ENCODE measurements at regions of chr22 and their contacts with region 1.

Region 1: DNA sequence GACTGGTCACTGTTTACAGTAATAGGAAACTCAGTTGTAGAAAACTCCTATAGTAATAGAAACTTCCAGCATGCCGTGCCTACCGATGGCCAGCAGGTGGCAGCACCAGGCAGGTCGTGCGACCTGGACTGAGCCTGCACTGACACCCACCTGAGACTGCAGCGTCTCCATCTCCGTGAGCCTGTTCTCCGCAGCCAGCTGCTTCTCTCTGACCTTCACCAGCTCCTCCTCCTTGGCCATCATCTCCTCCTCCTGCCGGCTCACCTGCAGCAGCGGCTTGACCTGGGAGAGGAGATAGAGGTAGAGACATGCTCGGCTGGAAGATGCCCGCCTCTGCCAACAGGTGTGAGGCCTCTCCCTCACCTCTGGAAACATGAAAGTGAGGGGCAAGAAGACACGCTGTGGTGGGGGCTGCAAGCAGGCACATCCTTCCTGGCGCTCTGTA is 48.5 kb downstream of the APOL1 start:
- DNase-seq: peak; percentile 28 to 70
- ATAC-seq: peak; percentile 64 to 76; a peak in 5 of 6 replicates
- H3K4me3 ChIP-seq: no peak overlapping the region
- H3K27ac ChIP-seq: peak overlapping the region in 1 of 2 experiments; percentile 40; a peak in 1 of 6 replicates
- H3K4me1 ChIP-seq: peaks cover 27% of the 10 kb centered on the region; the same call in 2 of the 3 replicates
- CTCF ChIP-seq: peak; percentile 68
- EP300 ChIP-seq: no peak
- POLR2A ChIP-seq: no peak
- RAD21 ChIP-seq: peak; percentile 73 to 75

Region 2: DNA sequence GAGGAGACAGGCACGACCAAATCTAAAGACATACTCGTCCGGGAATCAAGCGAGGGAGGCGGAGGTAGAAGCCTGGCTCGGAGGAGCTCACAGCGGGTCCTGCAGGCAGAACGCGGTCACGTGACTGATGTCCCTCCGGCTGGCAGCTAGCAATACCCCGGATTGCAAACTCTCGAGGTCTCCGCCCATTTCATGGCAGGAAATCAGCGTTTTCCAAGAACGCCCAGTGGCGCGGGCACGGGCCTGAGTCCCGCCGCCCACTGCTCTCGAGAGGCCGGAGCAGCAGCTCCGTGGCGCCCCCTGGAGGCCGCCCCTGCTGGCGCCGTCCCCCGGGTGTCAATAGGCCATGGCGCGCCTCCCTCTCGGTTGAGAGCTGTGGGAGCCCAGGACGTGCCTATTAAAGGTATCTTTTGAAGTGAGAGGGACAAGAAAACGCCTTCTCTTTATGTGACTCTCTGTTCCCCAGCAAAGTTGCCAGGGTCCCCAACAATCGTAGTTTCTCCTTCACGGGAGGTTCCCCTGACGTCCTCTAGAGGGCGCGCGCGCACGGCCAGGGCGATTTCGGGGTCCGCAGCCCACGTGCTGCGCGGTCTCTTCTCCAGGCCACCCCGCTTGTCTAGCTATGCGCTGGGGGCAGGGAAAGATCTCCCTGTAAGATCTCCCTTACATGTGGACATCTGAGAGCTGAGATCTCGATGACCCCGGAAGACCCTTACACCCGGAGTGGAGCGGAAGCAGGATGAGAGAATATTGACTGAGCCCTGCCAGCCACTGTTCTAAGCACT is 235.4 kb before region 1 on chr22:
- CTCF ChIA-PET with region 1: no interaction called
- POLR2A ChIA-PET with region 1: no interaction called
- DNase-seq: peak; percentile 89 to 92
- ATAC-seq: peak; percentile 94 to 96
- H3K4me3 ChIP-seq: peak overlapping the region; percentile 44
- H3K27ac ChIP-seq: peak overlapping the region; percentile 88 to 92
- H3K4me1 ChIP-seq: peaks cover 5% of the 10 kb centered on the region; the same call in 2 of the 3 replicates
- CTCF ChIP-seq: peak; percentile 100
- EP300 ChIP-seq: no peak
- POLR2A ChIP-seq: peak; percentile 62
- RAD21 ChIP-seq: peak; percentile 45 to 86

Region 3: DNA sequence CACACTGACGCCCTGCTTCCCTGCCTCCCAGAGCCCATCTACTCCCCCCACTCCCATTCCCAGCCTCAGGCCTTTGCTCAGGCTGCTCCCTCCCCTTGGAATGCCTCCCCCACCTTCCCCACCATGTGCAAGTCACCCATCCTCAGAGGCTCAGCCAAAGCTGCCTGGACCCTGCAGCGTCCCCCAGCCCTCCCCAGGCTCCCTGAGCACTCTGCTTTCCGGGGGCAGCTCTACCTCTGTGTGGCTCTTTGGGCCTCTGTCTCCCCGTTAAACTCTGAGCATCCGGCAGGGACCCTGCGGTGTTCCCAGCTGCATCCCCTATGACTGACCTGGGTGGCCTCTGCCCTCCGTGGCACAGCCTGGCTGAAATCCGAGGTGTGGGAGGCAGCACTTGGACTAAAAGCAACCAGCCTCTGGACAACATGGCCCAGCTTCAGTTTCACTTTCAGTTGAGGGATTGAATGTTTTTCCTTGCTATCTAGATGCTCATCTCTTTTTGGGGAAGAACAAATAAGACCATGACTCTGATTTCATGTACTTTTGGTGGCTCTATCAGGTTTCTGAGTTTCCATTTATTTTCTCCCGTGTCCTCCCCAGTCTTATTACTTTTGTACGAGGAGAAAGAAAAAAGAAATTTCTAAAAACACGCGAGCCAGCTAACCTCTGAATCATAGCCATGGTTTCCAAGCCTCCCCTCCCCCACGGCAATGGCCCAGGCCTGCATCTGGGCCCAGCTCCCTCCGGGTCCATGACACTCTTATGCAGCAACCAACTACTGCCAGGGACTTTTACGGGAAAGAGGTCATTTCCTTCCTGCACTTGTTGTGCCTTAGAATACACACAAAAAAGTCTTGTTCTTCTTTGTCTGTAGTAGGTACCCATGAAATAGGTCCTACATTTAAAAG is 144.6 kb before region 1 on chr22:
- CTCF ChIA-PET with region 1: no interaction called
- POLR2A ChIA-PET with region 1: no interaction called
- DNase-seq: no peak
- ATAC-seq: no peak
- H3K4me3 ChIP-seq: no peak overlapping the region
- H3K27ac ChIP-seq: peak overlapping the region in 1 of 2 experiments; percentile 26; a peak in 1 of 6 replicates
- H3K4me1 ChIP-seq: no peaks in the 10 kb centered on the region
- CTCF ChIP-seq: no peak
- EP300 ChIP-seq: no peak
- POLR2A ChIP-seq: no peak
- RAD21 ChIP-seq: no peak

Region 4: DNA sequence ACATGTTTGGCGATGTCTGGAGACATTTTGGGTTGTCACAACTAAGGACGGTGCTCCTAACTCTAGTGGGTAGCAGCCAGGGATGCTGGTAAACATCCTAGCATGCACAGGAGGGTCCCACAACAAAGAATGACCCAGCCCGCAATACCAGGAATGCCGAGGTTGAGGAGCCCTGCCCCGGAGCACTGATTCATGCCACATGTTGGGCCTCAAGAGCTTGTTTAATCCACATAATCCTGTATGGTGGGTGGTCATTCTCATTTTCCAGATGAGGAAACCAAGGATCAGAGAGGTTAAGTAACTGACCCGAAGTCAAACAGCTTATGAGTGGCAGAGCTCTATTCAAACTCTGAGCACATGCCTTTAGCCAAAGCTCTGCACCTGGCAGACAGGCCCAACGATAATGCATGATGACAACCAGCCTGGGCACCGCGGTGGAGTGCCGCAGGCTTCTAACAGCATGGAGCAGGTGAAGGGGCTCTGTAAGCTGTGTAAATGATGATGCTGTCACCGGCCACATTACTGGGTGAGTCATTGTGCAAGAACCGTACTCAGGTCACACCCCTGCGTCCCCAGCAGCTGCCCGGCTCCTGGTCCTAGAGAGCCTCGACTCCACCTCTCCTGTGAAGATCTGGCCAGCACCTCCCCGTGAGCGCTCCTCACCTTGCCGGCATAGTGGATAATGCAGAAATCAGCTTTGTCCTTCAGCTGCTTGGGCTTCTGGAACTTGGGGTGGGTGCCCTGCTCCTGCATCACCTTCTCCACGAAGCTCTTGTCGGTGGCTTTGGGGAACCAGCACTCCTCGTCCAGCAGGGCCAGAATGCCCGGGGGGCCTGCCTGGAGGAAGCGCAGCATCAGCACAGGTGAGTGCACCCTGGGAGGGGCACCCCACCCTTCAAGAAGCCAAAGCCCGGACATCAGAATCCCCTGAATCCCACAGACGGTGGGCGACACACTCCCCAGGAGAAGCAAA is 10.3 kb after region 1 on chr22:
- CTCF ChIA-PET with region 1: interaction called, 54 read pairs
- POLR2A ChIA-PET with region 1: interaction called, 5 read pairs
- DNase-seq: no peak
- ATAC-seq: no peak
- H3K4me3 ChIP-seq: no peak overlapping the region
- H3K27ac ChIP-seq: 0 out of 6 replicates have a peak overlapping the region, but pooled peaks of 1 of the 2 experiments have one; percentile 33
- H3K4me1 ChIP-seq: no peaks in the 10 kb centered on the region
- CTCF ChIP-seq: no peak
- EP300 ChIP-seq: no peak
- POLR2A ChIP-seq: no peak
- RAD21 ChIP-seq: no peak

Region 5: GRCh38 chr22:36323182-36323854 is 21.9 kb after region 1 on chr22:
- CTCF ChIA-PET with region 1: interaction called, 24 read pairs
- POLR2A ChIA-PET with region 1: no interaction called
- DNase-seq: no peak
- ATAC-seq: no peak
- H3K4me3 ChIP-seq: no peak overlapping the region
- H3K27ac ChIP-seq: peak overlapping the region in 1 of 2 experiments; percentile 99; a peak in 2 of 6 replicates
- H3K4me1 ChIP-seq: peaks cover 38% of the 10 kb centered on the region
- CTCF ChIP-seq: no peak
- EP300 ChIP-seq: no peak
- POLR2A ChIP-seq: no peak
- RAD21 ChIP-seq: no peak

Region 6: GRCh38 chr22:36359181-36359996 is 58.0 kb after region 1 on chr22:
- CTCF ChIA-PET with region 1: interaction called, 11 read pairs
- POLR2A ChIA-PET with region 1: no interaction called
- DNase-seq: no peak
- ATAC-seq: no peak
- H3K4me3 ChIP-seq: no peak overlapping the region
- H3K27ac ChIP-seq: peak overlapping the region; percentile 98 to 99
- H3K4me1 ChIP-seq: peaks cover 99% of the 10 kb centered on the region
- CTCF ChIP-seq: no peak
- EP300 ChIP-seq: no peak
- POLR2A ChIP-seq: no peak
- RAD21 ChIP-seq: no peak

Region 7: DNA sequence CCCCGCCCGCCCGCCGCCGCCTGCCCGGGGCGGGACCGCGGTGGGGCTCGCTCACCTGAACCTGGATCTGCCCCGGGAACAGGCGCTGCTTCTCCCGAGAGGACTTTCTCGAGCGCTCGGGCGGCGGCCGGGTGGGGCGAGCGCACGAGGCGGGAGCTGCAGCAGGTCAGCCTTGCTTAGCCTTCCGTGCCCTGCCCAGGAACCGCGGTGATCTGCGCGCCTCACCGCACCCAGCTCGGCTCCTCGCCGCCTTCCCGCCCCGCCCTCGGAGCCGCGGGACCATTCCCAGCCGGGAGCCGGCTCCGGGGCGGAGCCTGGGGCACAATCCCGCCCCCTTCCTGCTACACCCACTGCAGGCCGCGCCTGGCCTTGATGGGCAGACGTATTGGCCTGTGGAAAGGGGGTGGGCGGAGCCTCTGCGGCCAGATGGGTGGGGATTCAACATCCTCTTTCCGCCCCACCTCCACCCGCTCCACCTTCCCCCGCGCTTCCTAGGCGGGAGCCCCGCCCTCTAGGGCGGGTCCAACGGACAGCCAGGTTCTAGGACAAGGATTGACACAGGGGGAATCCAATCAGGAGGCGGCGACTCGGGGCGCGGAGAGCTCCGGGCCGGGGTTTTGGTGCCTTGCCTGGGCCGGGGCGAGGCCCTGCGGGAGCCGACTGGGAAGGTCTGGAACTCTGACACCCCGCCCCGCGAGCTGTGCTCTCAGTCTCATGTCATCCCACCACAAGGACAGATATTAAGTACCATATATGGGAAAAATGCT is 86.5 kb after region 1 on chr22 and contains the start of gene MYH9:
- CTCF ChIA-PET with region 1: interaction called, 13 read pairs
- POLR2A ChIA-PET with region 1: no interaction called
- DNase-seq: peak; percentile 92 to 98
- ATAC-seq: peak; percentile 88 to 93
- H3K4me3 ChIP-seq: peak within 1 kb of the TSS; percentile 100
- H3K27ac ChIP-seq: peak within 1 kb of the TSS; percentile 100
- H3K4me1 ChIP-seq: peaks cover 34% of the 10 kb centered on the region
- CTCF ChIP-seq: no peak
- EP300 ChIP-seq: no peak
- POLR2A ChIP-seq: peak; percentile 97
- RAD21 ChIP-seq: no peak
- polyA plus RNA-seq, gene MYH9: 92.1 and 162 TPM in 2 replicates

Region 8: GRCh38 chr22:36470162-36470993 is 169.0 kb after region 1 on chr22:
- CTCF ChIA-PET with region 1: interaction called, 113 read pairs
- POLR2A ChIA-PET with region 1: no interaction called
- DNase-seq: peak; percentile 55 to 84
- ATAC-seq: peak; percentile 77 to 84
- H3K4me3 ChIP-seq: no peak overlapping the region
- H3K27ac ChIP-seq: peak overlapping the region; percentile 69 to 98
- H3K4me1 ChIP-seq: peaks cover 50% of the 10 kb centered on the region
- CTCF ChIP-seq: peak; percentile 80
- EP300 ChIP-seq: no peak
- POLR2A ChIP-seq: no peak
- RAD21 ChIP-seq: peak; percentile 93 to 96

Measured in A549 (cell line).